GM10248 (cell line): ENCODE measurements at regions of chr11 and their contacts with region 1.

Region 1: DNA sequence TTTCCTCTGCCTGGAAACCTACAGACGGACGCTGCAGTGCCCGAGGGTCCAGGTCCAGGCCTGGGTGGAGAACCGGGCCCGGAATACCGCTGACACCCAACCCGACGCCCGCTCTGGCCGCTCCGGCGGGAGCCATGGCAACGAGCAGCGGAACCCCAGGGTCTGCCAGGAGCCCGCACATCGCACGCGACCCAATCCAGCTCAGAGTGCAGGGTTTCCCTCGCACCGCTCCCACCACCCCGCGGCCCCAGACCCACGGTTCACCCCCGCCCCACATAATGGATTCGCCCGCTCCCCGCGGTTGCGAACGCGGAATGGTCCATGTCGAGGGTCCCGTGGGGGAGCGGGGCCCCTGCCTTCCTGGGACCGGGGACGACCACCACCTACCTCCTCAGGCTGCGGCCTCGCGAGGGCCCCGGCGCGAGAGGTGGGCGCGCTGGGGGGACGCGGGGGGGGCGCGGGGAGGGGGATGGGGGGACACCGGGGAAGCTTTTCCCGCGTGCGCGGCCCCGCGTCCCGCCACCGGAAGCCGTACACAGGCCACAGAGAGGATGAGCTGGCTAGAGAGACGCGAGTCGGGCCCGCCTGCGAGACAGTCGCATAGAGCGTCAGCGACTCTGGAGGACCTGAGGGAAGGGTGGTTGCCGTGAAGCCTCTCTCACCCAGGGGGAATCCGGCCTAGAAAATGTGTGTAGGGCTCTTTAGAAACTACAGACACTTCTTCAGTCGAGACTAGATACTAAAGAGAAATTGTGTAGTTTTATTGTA is at the start of gene SSRP1:
- DNase-seq: peak; percentile 92
- CTCF ChIP-seq: peak; percentile 22

Region 2: GRCh38 chr11:57324886-57325734 is 10.4 kb before region 1 on chr11 and contains the start of gene TNKS1BP1:
- CTCF ChIA-PET with region 1: interaction called, 5 read pairs
- POLR2A ChIA-PET with region 1: interaction called, 10 read pairs
- DNase-seq: peak; percentile 93
- CTCF ChIP-seq: no peak